G401 (cell line): ENCODE measurements at regions of chr7 and their contacts with region 1.

Region 1: DNA sequence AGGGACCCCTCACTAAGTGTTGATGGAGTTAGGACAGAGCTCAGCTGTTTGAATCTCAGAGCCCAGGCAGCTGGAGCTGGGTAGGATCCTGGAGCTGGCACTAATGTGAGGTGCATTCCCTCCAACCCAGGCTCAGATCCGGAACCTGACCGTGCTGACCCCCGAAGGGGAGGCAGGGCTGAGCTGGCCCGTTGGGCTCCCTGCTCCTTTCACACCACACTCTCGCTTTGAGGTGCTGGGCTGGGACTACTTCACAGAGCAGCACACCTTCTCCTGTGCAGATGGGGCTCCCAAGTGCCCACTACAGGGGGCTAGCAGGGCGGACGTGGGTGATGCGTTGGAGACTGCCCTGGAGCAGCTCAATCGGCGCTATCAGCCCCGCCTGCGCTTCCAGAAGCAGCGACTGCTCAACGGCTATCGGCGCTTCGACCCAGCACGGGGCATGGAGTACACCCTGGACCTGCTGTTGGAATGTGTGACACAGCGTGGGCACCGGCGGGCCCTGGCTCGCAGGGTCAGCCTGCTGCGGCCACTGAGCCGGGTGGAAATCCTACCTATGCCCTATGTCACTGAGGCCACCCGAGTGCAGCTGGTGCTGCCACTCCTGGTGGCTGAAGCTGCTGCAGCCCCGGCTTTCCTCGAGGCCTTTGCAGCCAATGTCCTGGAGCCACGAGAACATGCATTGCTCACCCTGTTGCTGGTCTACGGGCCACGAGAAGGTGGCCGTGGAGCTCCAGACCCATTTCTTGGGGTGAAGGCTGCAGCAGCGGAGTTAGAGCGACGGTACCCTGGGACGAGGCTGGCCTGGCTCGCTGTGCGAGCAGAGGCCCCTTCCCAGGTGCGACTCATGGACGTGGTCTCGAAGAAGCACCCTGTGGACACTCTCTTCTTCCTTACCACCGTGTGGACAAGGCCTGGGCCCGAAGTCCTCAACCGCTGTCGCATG is 5.2 kb downstream of the CHPF2 start:
- DNase-seq: no peak

Region 2: GRCh38 chr7:151315038-151315655 is 77.6 kb after region 1 on chr7:
- in situ Hi-C with region 1: loop called (anchors 5 kb)
- DNase-seq: peak; percentile 79